SK-N-SH (cell line): ENCODE measurements at regions of chr11 and their contacts with region 1.

Region 1: GRCh38 chr11:76721755-76722677 is 51.5 kb upstream of the LRRC32 start:
- DNase-seq: peak; percentile 86
- H3K4me3 ChIP-seq: peak overlapping the region in 1 of 2 experiments; percentile 40; a peak in 2 of 4 replicates
- H3K27ac ChIP-seq: no peak overlapping the region; a peak in 1 of 4 replicates
- H3K4me1 ChIP-seq: peaks cover 0 to 4% of the 10 kb centered on the region in 2 experiments; a peak in 1 of 4 replicates
- H3K27me3 ChIP-seq: peaks cover 21% of the 10 kb centered on the region; the same call in 1 of the 2 replicates
- CTCF ChIP-seq: peak; percentile 85
- EP300 ChIP-seq: no peak
- RAD21 ChIP-seq: peak; percentile 69

Region 2: DNA sequence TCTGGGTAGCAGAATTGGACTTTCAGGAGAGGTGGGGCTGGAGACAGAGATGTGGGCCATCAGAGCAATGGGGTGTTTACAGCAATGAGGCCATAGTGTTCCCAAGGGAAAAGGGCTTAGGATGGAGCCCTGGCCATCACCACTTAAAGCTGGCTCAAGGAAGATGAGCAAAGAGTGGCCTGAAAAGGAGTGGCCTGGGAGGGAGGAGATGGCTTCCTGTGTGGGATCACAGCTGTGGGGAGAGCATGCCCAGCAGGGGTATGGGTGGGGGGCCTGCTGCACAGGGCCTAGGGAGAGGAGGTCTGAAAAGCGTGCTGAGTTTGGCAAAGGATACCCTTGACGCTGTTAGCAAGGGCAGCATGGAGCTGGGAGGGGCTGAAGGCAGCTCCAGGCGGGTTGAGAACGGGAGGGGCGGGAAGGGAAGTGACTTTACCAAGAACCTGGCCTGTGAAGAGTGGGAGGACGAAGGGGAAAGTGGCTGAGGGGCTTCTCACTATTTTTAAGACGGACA is 65.4 kb before region 1 on chr11:
- CTCF ChIA-PET with region 1: no interaction called
- POLR2A ChIA-PET with region 1: no interaction called
- DNase-seq: peak; percentile 25
- H3K4me3 ChIP-seq: no peak overlapping the region
- H3K27ac ChIP-seq: no peak overlapping the region
- H3K4me1 ChIP-seq: no peaks in the 10 kb centered on the region
- H3K27me3 ChIP-seq: no peaks in the 10 kb centered on the region
- CTCF ChIP-seq: no peak
- EP300 ChIP-seq: no peak
- RAD21 ChIP-seq: no peak

Region 3: GRCh38 chr11:76698321-76699060 is 23.5 kb before region 1 on chr11:
- CTCF ChIA-PET with region 1: interaction called, 25 read pairs
- POLR2A ChIA-PET with region 1: no interaction called
- DNase-seq: no peak
- H3K4me3 ChIP-seq: no peak overlapping the region
- H3K27ac ChIP-seq: no peak overlapping the region
- H3K4me1 ChIP-seq: peaks cover 10 to 17% of the 10 kb centered on the region in 2 experiments; a peak in 3 of 4 replicates
- H3K27me3 ChIP-seq: no peaks in the 10 kb centered on the region
- CTCF ChIP-seq: peak; percentile 52
- EP300 ChIP-seq: no peak
- RAD21 ChIP-seq: no peak

Region 4: DNA sequence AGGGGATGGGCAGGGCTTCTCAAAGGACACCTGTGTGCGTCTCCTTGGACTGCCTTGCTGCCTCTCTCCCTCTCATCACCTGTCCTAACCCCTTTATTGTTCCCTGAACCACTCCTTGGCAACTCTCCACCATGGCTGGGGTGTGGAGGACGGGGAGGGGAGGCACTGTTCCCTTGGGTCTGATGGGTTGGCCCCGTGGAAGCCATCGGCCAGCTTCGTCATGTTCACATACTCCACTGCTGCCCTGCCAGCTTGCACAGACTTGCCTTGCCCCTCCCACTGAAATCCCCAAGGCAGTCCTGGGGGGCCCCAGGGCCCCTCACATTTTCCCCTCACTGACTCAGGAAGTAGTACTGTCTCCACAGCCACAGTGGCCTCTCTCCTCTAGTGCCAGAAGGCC is 15.3 kb before region 1 on chr11:
- CTCF ChIA-PET with region 1: interaction called, 25 read pairs
- POLR2A ChIA-PET with region 1: no interaction called
- DNase-seq: no peak
- H3K4me3 ChIP-seq: no peak overlapping the region
- H3K27ac ChIP-seq: no peak overlapping the region
- H3K4me1 ChIP-seq: no peaks in the 10 kb centered on the region; a peak in 1 of 4 replicates
- H3K27me3 ChIP-seq: no peaks in the 10 kb centered on the region
- CTCF ChIP-seq: no peak
- EP300 ChIP-seq: no peak
- RAD21 ChIP-seq: no peak

Region 5: DNA sequence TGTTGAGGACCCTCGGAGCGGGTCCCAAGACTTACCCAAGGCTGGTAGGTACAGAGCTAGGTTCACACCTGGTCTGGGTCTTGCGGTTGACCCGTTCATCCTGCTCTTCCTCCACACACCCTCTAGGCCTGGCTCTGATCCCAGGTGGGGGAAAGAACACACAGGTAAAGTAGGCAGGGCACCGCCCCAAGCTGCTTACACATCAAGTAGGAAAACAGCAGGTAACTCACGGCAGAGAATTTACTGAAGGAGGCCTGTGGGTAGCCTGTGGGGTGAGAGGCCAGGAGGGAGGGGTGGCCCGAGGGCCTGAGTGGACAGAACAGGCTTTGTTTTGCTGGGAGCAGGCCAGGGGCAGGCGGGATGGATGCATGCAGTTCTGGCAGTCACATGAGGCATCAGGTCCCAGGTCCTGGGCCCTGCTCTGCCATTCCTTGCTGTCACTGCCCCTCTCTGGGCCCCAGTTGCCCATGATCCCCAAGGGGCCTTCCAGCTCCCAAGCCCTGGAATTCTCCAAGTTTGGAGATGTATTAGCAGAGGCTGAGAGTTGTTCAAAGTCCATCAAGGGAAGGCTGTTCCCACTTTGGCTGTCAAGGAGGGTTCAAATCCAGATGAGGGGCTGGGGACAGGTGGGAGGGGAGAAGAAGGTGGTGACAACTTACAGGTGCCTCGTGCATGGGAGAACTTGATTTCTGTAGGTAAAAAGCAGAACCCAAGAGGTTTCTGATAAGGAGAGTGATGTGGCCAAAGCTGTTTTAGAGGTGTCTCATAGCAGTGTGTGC is 66.8 kb after region 1 on chr11:
- CTCF ChIA-PET with region 1: interaction called, 10 read pairs
- POLR2A ChIA-PET with region 1: no interaction called
- DNase-seq: no peak
- H3K4me3 ChIP-seq: no peak overlapping the region
- H3K27ac ChIP-seq: peak overlapping the region in 1 of 2 experiments; percentile 43; a peak in 1 of 4 replicates
- H3K4me1 ChIP-seq: peaks cover 14 to 67% of the 10 kb centered on the region in 2 experiments; a peak in 3 of 4 replicates
- H3K27me3 ChIP-seq: no peaks in the 10 kb centered on the region
- CTCF ChIP-seq: no peak
- EP300 ChIP-seq: no peak
- RAD21 ChIP-seq: no peak

Region 6: DNA sequence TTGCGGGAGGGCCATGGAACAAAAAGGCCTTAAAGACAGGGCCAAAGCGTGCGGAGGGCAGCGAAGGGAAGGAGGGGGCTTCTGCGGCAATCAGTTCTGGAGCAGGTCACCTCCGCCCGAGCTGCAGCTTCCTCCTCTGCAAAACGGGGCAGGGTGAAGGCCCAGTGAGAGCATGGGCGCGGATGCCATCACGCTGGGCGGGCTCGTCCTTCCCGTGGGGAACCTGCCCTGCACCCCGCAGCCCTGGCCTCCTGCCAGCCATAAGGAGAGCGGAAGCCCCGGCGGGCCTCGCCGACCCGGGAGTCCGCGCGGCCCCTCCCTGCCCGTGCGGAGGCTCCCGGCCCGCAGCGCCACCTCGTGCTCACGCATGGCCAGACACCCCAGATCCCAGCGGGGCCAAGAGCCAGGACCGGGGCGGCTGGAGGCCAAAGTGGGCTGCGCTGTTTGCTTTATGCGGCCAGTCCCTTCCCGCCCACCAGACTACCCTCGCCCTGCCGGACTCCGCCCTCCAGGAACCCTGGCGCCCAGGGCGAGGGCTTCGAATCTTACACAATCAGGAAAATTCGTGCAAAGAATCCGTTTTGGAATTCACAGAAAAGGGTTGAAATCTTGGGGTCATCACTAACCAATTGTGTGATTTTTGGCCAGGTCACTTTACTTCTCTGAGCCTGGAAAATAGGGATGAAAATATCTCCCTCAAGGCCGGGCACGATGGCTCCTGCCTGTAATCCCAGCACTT is 77.2 kb after region 1 on chr11:
- CTCF ChIA-PET with region 1: interaction called, 205 read pairs
- POLR2A ChIA-PET with region 1: no interaction called
- DNase-seq: peak; percentile 97
- H3K4me3 ChIP-seq: peak overlapping the region in 1 of 2 experiments; percentile 46; a peak in 1 of 4 replicates
- H3K27ac ChIP-seq: no peak overlapping the region; a peak in 1 of 4 replicates
- H3K4me1 ChIP-seq: peaks cover 0 to 9% of the 10 kb centered on the region in 2 experiments; a peak in 1 of 4 replicates
- H3K27me3 ChIP-seq: no peaks in the 10 kb centered on the region
- CTCF ChIP-seq: peak; percentile 80
- EP300 ChIP-seq: no peak
- RAD21 ChIP-seq: peak; percentile 83

Region 7: GRCh38 chr11:77370226-77370625 is 648.2 kb after region 1 on chr11:
- CTCF ChIA-PET with region 1: no interaction called
- POLR2A ChIA-PET with region 1: no interaction called
- DNase-seq: no peak
- H3K4me3 ChIP-seq: no peak overlapping the region
- H3K27ac ChIP-seq: no peak overlapping the region
- H3K4me1 ChIP-seq: peaks cover 0 to 10% of the 10 kb centered on the region in 2 experiments; a peak in 1 of 4 replicates
- H3K27me3 ChIP-seq: no peaks in the 10 kb centered on the region
- CTCF ChIP-seq: 0 out of 2 replicates have a peak, but pooled peaks have one; percentile 17
- EP300 ChIP-seq: no peak
- RAD21 ChIP-seq: no peak